Left colon (tissue), 2 donors: ENCODE measurements at regions of chr1 and their contacts with region 1.

Region 1: GRCh38 chr1:48697066-48697707 is 79.5 kb downstream of the BEND5 start:
- DNase-seq: peak in 1 of 2 donors; percentile 65
- ATAC-seq: peak; percentile 49

Region 2: DNA sequence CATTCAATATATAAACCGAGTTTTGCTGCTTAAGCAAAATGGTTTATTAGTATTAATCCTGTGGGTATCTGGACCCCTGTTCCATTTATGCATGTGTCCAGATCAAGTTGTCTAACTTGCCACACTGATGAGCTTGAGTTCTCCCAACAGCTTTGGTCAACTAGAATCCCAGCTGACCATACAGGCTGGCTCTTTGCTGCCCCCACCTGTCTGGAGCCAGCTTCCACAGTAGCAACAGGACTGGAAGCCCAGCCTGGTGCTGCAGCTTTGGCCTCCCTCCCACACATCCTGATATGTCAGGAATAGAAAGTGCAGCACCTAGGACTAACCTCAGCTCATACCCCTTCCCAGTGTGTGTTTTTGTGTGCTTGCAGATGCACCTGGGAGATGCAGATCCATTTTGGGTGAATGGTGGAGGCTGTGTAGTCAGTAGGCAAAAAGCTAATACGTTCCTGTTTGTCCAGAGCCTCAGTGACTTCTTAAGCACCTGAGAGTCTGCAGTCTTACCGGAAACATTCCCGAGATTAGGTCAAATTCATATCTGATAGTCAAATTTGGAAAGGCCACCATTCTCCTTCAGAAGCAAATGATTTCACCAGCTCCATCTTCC is 120.4 kb after region 1 on chr1:
- intact Hi-C with region 1: loop called in 1 of 2 experiments (anchors 10 kb)
- DNase-seq: peak; percentile 44 to 53
- ATAC-seq: peak; percentile 68

Region 3: DNA sequence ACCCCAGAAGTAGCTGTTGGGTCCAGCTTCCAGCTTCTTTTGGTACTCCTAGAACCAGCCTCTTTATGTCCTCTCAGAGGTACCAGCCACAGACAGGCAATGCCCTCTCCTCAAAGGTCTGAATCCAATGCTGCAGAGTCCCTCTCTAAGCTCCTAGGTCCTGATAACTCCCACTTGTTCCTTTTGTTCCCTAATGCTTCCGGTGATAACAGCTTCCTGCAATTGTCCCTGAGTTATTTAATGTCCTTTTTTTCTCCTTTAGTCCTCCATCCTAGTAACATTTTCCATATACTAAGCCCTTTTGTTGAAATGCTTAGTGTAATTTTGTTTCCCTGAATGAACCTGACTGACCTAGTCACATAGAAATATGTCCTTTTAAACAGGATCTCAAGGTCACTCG is 281.2 kb after region 1 on chr1:
- intact Hi-C with region 1: no loop called
- DNase-seq: no peak
- ATAC-seq: no peak